ENCODE measurements at regions of chr18 and their contacts with region 1.

Region 1: DNA sequence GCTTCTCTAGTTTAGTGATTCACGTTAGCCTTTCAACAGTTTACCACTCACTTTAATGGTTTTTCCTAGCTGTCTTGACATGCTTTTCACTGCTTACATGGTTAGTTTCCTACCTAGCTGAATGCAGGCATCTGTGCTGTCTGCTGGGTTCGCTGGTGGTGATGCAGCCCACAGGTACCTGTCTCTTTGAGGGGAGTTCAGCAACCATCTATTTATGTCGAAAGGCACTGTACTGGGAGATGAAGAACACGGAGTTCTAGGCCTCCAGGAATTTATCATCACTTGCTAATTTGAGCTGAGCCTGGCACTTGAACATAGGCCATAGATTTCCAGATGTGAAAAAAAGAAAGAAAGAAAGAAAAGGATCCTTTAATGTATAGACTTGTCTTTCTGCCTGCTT is 148.5 kb downstream of the NEDD4L start:
- DNase-seq: no peak
- H3K4me3 ChIP-seq: no peak overlapping the region
- H3K27ac ChIP-seq: no peak overlapping the region
- H3K4me1 ChIP-seq: no peaks in the 10 kb centered on the region
- H3K27me3 ChIP-seq: no peaks in the 10 kb centered on the region
- CTCF ChIP-seq: no peak
- POLR2A ChIP-seq: no peak

Region 2: DNA sequence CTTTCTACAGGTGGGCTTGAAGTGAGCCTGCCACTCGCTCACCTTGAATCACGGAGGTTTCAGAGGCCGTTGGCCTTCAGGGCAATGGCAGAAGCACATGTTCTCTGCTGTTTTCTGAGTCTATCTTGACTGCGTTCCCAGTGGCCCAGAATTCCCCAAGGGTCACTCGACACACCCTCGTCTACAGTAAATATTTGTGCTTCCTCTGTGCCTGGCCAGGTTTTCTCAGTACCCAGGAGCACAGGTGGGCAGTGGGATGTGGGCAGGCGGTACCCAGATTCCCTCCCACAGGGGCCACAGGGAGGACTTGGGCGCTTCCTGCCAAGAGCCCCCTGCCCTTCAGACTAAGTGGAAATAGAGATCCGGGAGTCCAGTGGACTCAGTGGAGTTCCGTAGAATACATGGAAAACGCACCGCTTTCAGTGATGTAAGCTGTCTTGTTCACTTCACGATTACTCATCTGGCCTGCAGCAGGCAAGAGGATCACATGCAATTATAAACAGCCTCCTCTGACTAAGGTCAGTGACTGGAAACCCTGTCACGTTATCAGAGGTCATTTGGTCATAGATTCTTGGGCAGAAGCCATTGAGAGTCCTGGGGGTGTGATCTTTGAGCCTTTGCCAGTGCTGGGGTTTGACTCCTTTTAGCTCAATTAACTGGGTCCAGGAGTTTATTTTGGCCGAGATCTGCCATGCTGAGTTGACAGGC is 31.4 kb after region 1 on chr18:
- intact Hi-C with region 1: loop called (anchors 1 kb)
- DNase-seq: peak; percentile 73 to 74
- H3K4me3 ChIP-seq: peak overlapping the region in 2 of 3 donors; percentile 46 to 52
- H3K27ac ChIP-seq: peak overlapping the region; percentile 90 to 96
- H3K4me1 ChIP-seq: peaks cover 0 to 16% of the 10 kb centered on the region in 2 donors
- H3K27me3 ChIP-seq: no peaks in the 10 kb centered on the region
- CTCF ChIP-seq: no peak
- POLR2A ChIP-seq: peak; percentile 40

Region 3: GRCh38 chr18:58953627-58954026 is 761.1 kb after region 1 on chr18:
- intact Hi-C with region 1: no loop called
- DNase-seq: no peak
- H3K4me3 ChIP-seq: no peak overlapping the region
- H3K27ac ChIP-seq: no peak overlapping the region
- H3K4me1 ChIP-seq: no peaks in the 10 kb centered on the region
- H3K27me3 ChIP-seq: no peaks in the 10 kb centered on the region
- CTCF ChIP-seq: no peak
- POLR2A ChIP-seq: no peak